Head of caudate nucleus (tissue), 42 donors: ENCODE measurements at regions of chr7 and their contacts with region 1.

Region 1: DNA sequence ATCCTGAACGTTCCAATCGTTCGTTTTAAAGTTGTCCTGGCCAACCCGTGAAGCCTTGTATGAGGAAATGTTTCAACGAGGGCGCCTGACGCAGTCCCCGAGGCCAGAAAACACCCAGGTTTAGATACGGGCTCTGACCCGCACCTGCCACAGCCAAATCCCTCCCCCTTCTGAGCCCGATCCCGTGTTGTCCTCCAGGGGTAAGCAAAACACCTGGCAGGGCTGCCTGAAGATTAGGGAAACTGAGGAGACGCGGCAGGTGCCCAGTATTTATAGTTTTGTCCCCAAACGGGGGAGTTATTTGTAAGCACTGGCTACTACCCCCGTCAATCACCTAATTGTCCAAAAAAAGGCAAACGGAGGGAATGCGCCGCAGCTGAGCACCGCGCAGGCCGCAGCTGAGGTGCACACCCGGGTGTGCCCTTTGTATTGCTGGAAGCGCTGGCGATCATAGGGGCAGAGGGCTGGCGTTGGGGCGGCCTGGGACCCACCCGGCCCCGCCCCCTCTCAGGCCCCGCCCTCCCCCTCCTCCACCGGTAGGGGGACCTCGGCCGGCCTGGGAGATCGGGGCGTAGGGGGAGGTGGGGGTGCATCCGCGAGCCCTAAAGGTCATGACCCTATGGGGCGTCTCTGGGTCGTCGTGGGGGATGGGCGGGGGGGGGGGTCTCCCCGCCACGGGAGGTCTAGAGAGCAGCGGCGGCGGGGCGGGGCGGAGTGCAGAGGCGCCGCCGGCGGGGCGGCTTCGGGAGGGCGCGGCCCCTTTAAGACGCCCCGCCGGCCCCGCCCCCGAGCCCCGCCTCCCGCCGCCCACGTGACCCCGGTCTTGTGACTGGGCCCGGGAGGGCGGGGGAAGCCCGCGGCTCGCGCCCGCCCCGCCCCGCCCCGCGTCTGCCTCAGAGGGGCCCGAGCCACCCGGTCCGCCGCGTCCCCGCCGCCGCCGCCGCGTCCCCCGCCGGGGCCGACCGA is at the start of gene BRI3:
- DNase-seq: peak; percentile 66 to 95 (median 88)

Region 2: DNA sequence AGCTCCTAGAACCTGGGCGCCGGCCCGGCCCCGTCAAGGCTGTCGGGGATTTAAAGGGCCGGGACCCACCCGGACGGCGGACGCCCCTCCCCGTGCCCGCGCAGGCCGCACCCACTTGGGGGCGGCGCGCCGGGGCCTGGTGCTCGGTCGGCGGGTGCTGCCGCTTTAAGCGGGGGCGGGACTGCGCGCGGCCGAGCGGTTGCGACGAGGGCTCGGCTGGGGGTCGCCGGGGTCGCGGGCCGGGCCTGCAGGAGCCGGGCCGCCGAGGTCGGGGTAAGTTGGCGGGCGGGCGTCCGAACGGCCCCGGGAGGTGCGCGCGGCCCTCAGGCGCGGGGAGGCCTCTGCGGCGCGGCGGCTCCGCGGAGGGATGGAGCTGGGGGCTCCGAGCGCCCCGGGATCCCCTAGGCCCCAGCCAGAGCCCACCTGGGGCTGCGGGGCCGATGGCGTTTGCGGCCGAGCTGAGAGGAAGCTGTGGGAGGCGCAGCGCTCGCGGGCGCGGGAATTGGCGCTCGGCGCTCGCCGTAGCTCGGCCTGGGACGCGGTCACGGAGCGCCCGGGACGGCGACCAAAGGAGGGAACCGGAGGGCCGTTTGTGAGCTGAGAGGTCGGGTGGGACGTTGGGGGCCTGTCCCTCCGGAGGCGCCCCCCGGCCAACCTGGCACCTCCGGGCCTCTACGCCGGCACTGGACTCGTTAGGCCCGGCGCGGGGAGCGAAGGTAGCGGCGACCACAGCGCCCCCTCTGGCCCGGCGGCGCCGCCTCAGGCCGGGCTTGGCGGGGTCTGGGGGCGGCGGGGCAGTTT is 597.5 kb after region 1 on chr7 and contains the start of gene TRRAP:
- intact Hi-C with region 1: loop called (anchors 10 kb)
- DNase-seq: peak in 39 of 42 donors; percentile 48 to 83 (median 71)